Gastrocnemius medialis (tissue), 4 donors: ENCODE measurements at regions of chr1 and their contacts with region 1.

Region 1: DNA sequence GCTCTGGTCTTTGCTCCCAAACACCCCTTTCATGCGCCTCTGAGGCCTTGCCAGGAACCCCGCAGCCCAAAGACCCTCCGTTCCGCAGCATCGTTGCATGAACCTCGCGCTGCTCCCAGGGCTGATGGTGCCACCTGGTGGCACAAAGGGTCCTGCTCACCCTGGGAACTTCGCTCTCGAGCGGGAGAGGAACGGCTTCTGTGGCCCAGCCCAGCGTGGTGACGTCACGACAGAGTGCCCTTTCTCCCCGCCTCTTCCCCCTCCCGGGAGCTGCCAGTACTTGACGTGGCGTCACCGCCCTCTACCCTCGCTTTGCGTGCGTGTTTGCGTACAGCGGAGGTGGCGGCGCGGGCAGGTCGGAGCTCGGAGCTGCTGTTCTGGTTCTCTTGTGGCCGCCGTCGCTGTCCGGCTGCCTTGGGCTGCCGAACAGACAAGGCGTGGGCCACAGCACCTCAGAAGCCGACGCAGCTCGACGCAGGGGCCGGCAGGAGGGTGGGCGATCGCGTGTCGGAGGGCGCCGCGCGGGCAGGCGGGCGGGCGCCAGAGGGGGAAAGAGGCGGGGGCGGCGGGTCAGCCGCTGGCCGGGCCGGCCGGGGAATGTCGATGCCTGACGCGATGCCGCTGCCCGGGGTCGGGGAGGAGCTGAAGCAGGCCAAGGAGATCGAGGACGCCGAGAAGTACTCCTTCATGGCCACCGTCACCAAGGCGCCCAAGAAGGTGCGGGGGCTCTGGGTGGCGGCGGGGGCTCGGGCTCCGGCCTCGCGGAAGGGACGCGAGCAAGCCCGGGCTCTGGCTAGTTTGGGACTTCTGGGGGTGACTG is at the start of gene AHCYL1:
- DNase-seq: peak; percentile 99 to 100
- ATAC-seq: peak; percentile 94 to 95
- H3K4me3 ChIP-seq: peak within 1 kb of the TSS; percentile 74 to 95 (median 82)
- H3K27ac ChIP-seq: peak within 1 kb of the TSS; percentile 92 to 99 (median 96)
- H3K4me1 ChIP-seq: peaks cover 54 to 58% of the 10 kb centered on the region in 2 donors
- H3K27me3 ChIP-seq: no peaks in the 10 kb centered on the region
- CTCF ChIP-seq: peak; percentile 98 to 99 (median 98)
- POLR2A ChIP-seq: peak; percentile 100
- total RNA-seq, gene AHCYL1: 42.3 to 109 (median 69.6) TPM

Region 2: DNA sequence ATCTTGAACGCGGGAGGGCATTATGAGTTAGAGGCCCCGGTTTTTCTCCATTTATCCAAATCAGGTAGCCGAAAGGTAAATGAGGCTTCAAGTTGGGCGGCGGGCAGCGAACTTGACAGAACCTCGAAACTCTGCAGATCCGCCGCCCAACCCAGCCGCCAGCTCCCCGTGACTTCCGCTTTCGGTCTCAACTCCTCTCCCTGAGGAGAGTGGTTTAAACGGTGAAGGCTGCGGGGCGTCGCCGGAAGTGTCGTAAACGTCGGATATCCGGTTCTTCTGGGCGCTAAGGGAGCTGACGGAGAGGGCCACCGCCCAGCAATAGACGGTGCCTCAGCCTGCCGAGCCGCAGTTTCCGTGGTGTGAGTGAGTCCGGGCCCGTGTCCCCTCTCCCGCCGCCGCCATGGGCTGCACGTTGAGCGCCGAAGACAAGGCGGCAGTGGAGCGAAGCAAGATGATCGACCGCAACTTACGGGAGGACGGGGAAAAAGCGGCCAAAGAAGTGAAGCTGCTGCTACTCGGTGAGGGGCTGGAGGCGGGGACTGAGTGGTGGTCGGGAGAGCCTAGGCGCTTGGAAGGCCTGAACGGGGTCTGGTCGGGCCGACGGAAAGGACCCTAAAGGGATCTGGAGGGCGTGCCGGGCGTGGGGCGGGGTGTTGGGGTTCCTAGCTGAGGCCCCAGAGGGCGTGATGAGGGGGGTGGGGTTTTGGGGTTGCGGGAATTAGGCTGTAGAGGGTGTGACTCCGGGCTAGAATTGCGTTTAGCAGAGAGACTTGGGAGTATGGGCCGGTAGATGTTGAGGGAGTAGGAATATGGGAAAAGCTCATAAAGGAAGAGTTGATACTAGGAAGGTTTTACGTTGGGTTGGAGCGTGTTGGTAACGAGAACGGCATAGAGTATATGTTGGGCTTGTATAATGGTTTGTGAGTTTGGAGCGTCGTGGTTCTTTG is 436.1 kb before region 1 on chr1 and contains the start of gene GNAI3:
- in situ Hi-C with region 1: loop called (anchors 5 to 10 kb)
- intact Hi-C with region 1: loop called (anchors 1 kb)
- DNase-seq: peak; percentile 96
- ATAC-seq: peak; percentile 96 to 97
- H3K4me3 ChIP-seq: peak within 1 kb of the TSS; percentile 82 to 98 (median 93)
- H3K27ac ChIP-seq: peak within 1 kb of the TSS; percentile 91 to 99 (median 96)
- H3K4me1 ChIP-seq: peaks cover 33 to 34% of the 10 kb centered on the region in 2 donors
- H3K27me3 ChIP-seq: no peaks in the 10 kb centered on the region
- CTCF ChIP-seq: peak in 1 of 5 experiments; percentile 27
- POLR2A ChIP-seq: peak; percentile 97
- total RNA-seq, gene GNAI3: 0.90 to 2.5 (median 1.8) TPM

Region 3: GRCh38 chr1:109630081-109630897 is 354.4 kb before region 1 on chr1:
- in situ Hi-C with region 1: loop called in 2 of 4 experiments (anchors 10 kb)
- intact Hi-C with region 1: no loop called
- DNase-seq: no peak
- ATAC-seq: no peak
- H3K4me3 ChIP-seq: no peak overlapping the region
- H3K27ac ChIP-seq: no peak overlapping the region
- H3K4me1 ChIP-seq: no peaks in the 10 kb centered on the region
- H3K27me3 ChIP-seq: no peaks in the 10 kb centered on the region
- CTCF ChIP-seq: peak in 2 of 5 experiments; percentile 28 to 55
- POLR2A ChIP-seq: no peak

Region 4: DNA sequence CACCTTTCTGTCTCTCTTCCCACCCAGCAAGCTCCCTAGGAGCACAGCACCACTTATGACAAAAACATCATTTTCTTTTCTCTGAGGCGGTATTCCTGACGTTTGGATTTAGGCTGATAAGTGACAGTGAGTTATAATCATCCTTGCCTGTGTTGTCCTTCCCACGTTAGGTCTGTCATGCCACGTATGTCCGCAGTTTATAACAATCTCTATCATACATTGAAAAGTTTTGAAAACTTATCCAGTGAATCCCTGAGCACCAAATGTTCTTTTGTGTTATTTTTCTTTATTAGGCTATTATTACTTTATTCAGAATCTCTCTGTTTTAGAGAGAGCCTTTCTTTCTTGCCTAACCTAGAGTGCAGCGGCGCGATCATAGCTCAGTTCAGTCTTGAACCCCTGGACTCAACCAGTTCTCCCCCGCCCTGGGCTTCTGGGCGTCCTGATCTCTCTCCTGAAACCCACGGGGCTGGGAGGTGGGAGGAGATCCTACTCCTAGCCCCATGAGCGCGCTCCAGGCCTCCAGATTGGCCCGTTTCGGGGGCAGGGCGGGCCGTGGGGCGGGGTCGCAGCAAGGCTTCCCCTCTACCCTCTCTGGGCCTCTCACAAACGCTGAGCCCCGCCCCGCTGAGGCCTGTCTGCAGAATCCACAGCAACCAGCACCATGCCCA is 317.1 kb before region 1 on chr1 and contains the start of gene GSTM2:
- in situ Hi-C with region 1: loop called in 1 of 4 experiments (anchors 10 kb)
- intact Hi-C with region 1: no loop called
- DNase-seq: peak; percentile 86 to 90
- ATAC-seq: peak; percentile 92
- H3K4me3 ChIP-seq: peak within 1 kb of the TSS; percentile 62 to 67 (median 64)
- H3K27ac ChIP-seq: peak within 1 kb of the TSS; percentile 69 to 82 (median 74)
- H3K4me1 ChIP-seq: peaks cover 6 to 16% of the 10 kb centered on the region in 2 donors
- H3K27me3 ChIP-seq: no peaks in the 10 kb centered on the region
- CTCF ChIP-seq: no peak
- POLR2A ChIP-seq: peak; percentile 28 to 49
- total RNA-seq, gene GSTM2: 29.2 to 41.4 (median 39.0) TPM

Region 5: DNA sequence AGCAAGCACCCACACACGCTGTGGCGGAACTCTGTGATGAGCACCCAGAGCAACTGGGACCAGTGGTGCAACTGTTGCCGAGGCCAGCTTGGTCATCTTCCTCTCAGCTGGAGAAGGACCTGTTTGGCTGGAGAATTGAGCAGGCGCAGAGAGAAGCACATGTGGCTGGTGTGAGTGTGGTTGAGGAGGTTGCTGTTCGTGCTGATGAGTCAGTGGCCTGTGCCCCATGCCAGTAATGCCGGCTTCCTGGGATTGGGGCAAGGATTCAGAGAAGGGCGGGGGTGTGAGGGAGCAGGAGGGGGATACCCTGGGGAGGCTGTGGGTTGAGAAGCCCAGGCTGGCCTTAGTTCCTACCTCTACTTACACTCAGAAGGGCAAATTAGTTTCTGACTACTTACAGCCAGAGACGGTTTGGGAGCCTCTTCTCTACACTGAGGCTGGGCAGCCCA is 163.4 kb before region 1 on chr1:
- in situ Hi-C with region 1: no loop called
- intact Hi-C with region 1: loop called (anchors 1 kb)
- DNase-seq: peak; percentile 79 to 89
- ATAC-seq: peak; percentile 71 to 80
- H3K4me3 ChIP-seq: no peak overlapping the region
- H3K27ac ChIP-seq: peak overlapping the region; percentile 55 to 83 (median 81)
- H3K4me1 ChIP-seq: peaks cover 36 to 41% of the 10 kb centered on the region in 2 donors
- H3K27me3 ChIP-seq: no peaks in the 10 kb centered on the region
- CTCF ChIP-seq: no peak
- POLR2A ChIP-seq: peak in 1 of 2 donors; percentile 16

Region 6: GRCh38 chr1:109910123-109910962 is 74.3 kb before region 1 on chr1 and contains the start of gene CSF1:
- in situ Hi-C with region 1: loop called in 1 of 4 experiments (anchors 5 kb)
- intact Hi-C with region 1: loop called (anchors 2 kb)
- DNase-seq: peak; percentile 51 to 74
- ATAC-seq: peak; percentile 80 to 84
- H3K4me3 ChIP-seq: peak within 1 kb of the TSS; percentile 64 to 92 (median 72)
- H3K27ac ChIP-seq: peak within 1 kb of the TSS; percentile 72 to 87 (median 82)
- H3K4me1 ChIP-seq: peaks cover 35 to 40% of the 10 kb centered on the region in 2 donors
- H3K27me3 ChIP-seq: no peaks in the 10 kb centered on the region
- CTCF ChIP-seq: peak in 1 of 5 experiments; percentile 9
- POLR2A ChIP-seq: peak; percentile 50 to 54
- total RNA-seq, gene CSF1: 14.6 to 31.1 (median 19.6) TPM

Region 7: DNA sequence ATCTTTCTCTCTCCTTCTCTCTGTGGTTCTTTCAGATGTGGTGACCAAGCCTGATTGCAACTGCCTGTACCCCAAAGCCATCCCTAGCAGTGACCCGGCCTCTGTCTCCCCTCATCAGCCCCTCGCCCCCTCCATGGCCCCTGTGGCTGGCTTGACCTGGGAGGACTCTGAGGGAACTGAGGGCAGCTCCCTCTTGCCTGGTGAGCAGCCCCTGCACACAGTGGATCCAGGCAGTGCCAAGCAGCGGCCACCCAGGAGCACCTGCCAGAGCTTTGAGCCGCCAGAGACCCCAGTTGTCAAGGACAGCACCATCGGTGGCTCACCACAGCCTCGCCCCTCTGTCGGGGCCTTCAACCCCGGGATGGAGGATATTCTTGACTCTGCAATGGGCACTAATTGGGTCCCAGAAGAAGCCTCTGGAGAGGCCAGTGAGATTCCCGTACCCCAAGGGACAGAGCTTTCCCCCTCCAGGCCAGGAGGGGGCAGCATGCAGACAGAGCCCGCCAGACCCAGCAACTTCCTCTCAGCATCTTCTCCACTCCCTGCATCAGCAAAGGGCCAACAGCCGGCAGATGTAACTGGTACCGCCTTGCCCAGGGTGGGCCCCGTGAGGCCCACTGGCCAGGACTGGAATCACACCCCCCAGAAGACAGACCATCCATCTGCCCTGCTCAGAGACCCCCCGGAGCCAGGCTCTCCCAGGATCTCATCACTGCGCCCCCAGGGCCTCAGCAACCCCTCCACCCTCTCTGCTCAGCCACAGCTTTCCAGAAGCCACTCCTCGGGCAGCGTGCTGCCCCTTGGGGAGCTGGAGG is 61.3 kb before region 1 on chr1:
- in situ Hi-C with region 1: loop called in 1 of 4 experiments (anchors 5 kb)
- intact Hi-C with region 1: loop called (anchors 2 kb)
- DNase-seq: no peak
- ATAC-seq: no peak
- H3K4me3 ChIP-seq: no peak overlapping the region
- H3K27ac ChIP-seq: peak overlapping the region in 2 of 4 donors; percentile 33 to 38
- H3K4me1 ChIP-seq: peaks cover 7 to 12% of the 10 kb centered on the region in 2 donors
- H3K27me3 ChIP-seq: no peaks in the 10 kb centered on the region
- CTCF ChIP-seq: peak in 4 of 5 experiments; percentile 17 to 38 (median 24)
- POLR2A ChIP-seq: no peak